Activated CD4-positive, alpha-beta T cell treated with anti-CD3 and anti-CD28 coated beads for 36 hours (primary cell): ENCODE measurements at regions of chr22 and their contacts with region 1.

Region 1: GRCh38 chr22:38181453-38182247 is at the start of gene PLA2G6:
- DNase-seq: peak; percentile 99
- ATAC-seq: peak; percentile 92
- H3K4me3 Mint-ChIP-seq: peak within 1 kb of the TSS; percentile 96
- H3K27ac Mint-ChIP-seq: peak within 1 kb of the TSS; percentile 98
- H3K4me1 Mint-ChIP-seq: peaks cover 32% of the 10 kb centered on the region
- H3K27me3 Mint-ChIP-seq: no peaks in the 10 kb centered on the region
- total RNA-seq, gene PLA2G6: 54.0 to 57.3 TPM

Region 2: DNA sequence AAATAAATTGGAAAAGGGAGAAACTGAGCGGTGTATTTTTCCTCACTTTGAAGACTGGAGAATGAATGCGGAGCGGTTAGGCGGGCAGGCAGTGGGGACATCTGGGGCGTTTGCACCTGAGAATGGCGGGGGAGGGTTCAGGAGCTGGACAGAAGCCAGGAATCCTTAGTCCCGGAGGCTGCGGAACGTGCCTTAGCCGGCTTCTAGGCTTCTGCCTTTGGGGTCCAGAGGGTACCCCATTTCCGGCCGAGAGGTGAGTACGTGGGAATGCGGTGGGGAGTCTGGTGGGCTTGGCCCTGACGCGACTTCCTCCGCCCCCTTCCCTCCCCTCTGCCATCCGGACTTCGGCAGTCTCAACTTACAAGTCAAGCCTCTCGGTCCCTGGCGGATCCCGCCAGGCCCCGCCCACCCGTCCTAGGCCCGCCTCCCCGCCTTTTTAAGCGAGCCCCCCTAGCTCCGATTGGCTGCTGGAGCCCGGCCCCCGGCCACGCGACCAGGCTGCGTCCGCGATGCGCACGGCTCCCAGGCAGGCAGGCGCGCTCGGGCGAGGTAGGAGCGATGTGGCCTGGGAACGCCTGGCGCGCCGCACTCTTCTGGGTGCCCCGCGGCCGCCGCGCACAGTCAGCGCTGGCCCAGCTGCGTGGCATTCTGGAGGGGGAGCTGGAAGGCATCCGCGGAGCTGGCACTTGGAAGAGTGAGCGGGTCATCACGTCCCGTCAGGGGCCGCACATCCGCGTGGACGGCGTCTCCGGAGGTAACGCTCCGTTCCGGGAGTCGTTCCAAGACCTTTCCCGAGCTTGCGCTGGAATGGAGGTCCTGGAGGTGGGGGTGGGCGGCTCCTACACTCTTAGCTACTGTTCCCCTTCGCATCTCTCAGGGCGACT is 374.0 kb before region 1 on chr22 and contains the start of gene GCAT:
- CTCF ChIA-PET with region 1: no interaction called
- POLR2A ChIA-PET with region 1: no interaction called
- intact Hi-C with region 1: loop called in 1 of 2 experiments (anchors 1 kb)
- DNase-seq: peak; percentile 97
- ATAC-seq: peak; percentile 97
- H3K4me3 Mint-ChIP-seq: peak within 1 kb of the TSS; percentile 78
- H3K27ac Mint-ChIP-seq: peak within 1 kb of the TSS; percentile 31
- H3K4me1 Mint-ChIP-seq: peaks cover 41% of the 10 kb centered on the region
- H3K27me3 Mint-ChIP-seq: peaks cover 37% of the 10 kb centered on the region
- total RNA-seq, gene GCAT: 21.3 to 22.4 TPM

Region 3: GRCh38 chr22:37953437-37954179 is 228.0 kb before region 1 on chr22 and contains the starts of genes C22orf23 and POLR2F:
- CTCF ChIA-PET with region 1: no interaction called
- POLR2A ChIA-PET with region 1: no interaction called
- intact Hi-C with region 1: loop called in 1 of 2 experiments (anchors 2 kb)
- DNase-seq: peak; percentile 98
- ATAC-seq: peak; percentile 98
- H3K4me3 Mint-ChIP-seq: peak within 1 kb of the TSS; percentile 86
- H3K27ac Mint-ChIP-seq: peak within 1 kb of the TSS; percentile 91
- H3K4me1 Mint-ChIP-seq: peaks cover 26% of the 10 kb centered on the region
- H3K27me3 Mint-ChIP-seq: peaks cover 11% of the 10 kb centered on the region
- total RNA-seq, gene C22orf23: 0.16 TPM in 1 of 2 experiments, not detected in the other
- total RNA-seq, gene POLR2F: 70.5 to 77.8 TPM

Region 4: DNA sequence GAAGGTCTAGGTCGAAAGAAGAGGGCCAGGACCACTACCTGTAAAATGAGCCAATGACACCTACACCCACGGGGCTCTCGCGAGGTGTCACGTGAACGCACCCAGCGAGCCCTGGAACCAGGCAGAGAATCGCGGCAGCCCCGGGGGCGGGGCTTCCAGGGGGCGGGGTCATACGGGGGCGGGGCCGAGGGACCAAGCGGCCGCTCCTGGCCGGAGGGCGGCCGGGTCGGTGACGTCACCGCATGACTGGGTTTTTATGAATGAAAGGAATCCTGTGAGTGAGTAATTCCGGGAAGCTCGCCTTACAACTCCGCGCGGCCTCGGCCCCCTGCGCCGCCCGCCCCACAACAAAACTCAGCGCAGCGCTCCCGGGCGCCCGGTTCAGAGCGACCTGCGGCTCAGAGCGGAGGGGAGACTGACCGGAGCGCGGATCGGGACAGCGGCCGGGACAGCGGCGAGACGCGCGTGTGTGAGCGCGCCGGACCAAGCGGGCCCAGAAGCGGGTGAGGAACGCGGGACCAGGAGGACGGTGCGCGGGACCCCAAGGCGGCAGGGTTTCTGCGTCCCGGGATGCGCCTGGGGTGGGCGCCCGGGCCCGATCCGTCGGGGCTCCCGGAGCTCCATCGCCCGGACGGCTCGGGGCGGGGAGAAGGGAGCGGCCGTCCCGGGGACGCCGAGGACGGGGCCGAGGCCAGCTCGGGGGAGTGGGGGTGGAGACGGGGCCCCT is 20.2 kb after region 1 on chr22 and contains the start of gene MAFF:
- CTCF ChIA-PET with region 1: interaction called, 3 read pairs
- POLR2A ChIA-PET with region 1: interaction called, 10 read pairs
- intact Hi-C with region 1: loop called (anchors 1 kb)
- DNase-seq: peak; percentile 97
- ATAC-seq: peak; percentile 72
- H3K4me3 Mint-ChIP-seq: peak within 1 kb of the TSS; percentile 82
- H3K27ac Mint-ChIP-seq: peak within 1 kb of the TSS; percentile 86
- H3K4me1 Mint-ChIP-seq: peaks cover 30% of the 10 kb centered on the region
- H3K27me3 Mint-ChIP-seq: no peaks in the 10 kb centered on the region
- total RNA-seq, gene MAFF: 8.3 to 9.4 TPM

Region 5: DNA sequence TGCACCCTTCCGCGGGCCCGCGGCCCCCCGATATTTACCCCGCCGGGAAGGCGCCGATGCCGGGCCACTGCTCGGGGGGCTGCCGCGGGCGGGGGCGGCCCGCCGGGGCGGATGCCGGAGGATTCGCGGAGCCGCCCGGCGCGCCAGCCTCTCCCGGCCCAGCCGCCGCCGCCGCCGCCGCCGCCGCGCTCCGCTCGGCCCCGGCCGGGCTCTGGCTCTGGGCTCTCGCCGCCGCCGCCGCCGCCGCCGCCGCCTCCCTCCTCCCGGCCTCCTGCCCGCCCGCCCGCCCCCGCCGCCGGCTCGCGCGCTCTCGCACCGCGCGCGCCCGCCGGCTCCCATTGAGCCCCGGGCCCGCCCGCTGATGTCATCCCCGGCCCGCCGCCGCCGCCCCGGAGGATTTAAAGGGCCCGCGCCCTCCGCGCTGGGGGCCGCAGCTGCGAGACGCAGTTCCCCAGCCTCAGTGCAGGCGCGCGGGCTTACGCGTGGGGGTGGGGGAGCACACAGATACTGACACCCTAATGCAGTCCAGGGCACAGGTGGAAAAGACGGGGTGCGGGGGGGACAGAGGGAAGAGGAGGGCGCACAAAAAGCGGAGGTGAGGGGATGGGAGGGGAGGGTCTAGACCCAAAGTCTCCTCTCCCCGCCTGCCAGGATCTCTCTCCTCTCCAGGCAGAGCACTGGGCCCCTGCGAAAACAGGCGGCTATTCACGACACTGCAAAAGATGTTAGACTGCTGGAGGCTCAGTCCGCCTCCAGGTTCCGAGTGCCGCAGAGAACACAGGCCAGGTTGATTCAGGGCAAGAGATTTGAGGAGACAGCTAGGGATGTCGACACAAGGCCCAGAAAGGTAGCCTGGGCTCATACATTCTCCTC is 135.7 kb after region 1 on chr22 and contains the start of gene CSNK1E:
- CTCF ChIA-PET with region 1: no interaction called
- POLR2A ChIA-PET with region 1: no interaction called
- intact Hi-C with region 1: loop called in 1 of 2 experiments (anchors 1 kb)
- DNase-seq: peak; percentile 84
- ATAC-seq: peak; percentile 63
- H3K4me3 Mint-ChIP-seq: peak within 1 kb of the TSS; percentile 90
- H3K27ac Mint-ChIP-seq: peak within 1 kb of the TSS; percentile 94
- H3K4me1 Mint-ChIP-seq: peaks cover 41% of the 10 kb centered on the region
- H3K27me3 Mint-ChIP-seq: no peaks in the 10 kb centered on the region
- total RNA-seq, gene CSNK1E: 117 to 145 TPM

Region 6: DNA sequence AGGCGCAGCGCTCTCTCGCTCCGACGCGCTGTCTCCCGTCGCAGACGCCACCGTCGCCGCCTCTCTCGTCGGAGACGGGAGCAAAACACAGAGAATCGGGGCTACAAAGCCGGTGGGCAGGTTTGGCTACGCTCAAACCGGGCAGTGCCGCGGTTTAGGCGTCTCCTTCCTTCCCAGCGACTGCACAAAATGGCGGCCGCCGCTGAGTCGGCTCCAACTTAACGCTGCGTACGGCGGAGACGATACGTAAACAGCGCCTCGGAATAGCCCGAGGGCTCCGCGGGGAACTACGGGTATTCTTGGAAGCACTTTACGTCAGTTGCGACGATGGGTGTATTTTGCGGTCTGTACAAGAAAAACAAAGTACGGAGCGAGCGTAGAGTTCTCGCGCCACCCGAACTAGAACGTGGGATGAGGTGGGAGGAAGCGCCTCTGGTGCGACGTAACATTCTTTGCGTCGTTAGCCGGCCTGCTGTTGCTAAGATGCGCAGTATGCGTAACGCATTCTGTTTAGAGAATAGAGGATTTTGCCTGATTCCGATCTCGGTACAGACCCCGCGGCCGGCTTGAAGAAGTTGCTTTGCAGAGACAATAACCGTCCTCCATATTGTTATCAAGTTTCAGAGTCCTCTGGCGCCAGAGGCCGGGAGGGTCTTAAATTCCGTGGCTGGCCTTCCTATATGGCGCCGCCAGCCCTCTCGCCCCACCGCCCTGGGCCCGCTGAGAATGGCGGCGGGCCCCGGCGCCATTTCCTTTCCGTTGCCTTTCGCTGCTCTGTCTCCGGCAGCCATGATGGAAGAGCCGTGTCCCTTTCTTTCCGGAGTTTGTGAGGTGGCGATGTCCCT is 324.7 kb after region 1 on chr22 and contains the start of gene DDX17:
- CTCF ChIA-PET with region 1: no interaction called
- POLR2A ChIA-PET with region 1: no interaction called
- intact Hi-C with region 1: loop called in 1 of 2 experiments (anchors 2 kb)
- DNase-seq: peak; percentile 95
- ATAC-seq: peak; percentile 89
- H3K4me3 Mint-ChIP-seq: peak within 1 kb of the TSS; percentile 89
- H3K27ac Mint-ChIP-seq: peak within 1 kb of the TSS; percentile 100
- H3K4me1 Mint-ChIP-seq: peaks cover 36% of the 10 kb centered on the region
- H3K27me3 Mint-ChIP-seq: no peaks in the 10 kb centered on the region
- total RNA-seq, gene DDX17: 259 to 328 TPM